GM10248 (cell line): ENCODE measurements at regions of chr2 and their contacts with region 1.

Region 1: GRCh38 chr2:237085248-237086221 is at the start of gene COPS8:
- DNase-seq: peak; percentile 95
- CTCF ChIP-seq: peak; percentile 18

Region 2: GRCh38 chr2:237060534-237061312 is 24.8 kb before region 1 on chr2:
- CTCF ChIA-PET with region 1: interaction called, 15 read pairs
- POLR2A ChIA-PET with region 1: no interaction called
- DNase-seq: peak; percentile 62
- CTCF ChIP-seq: peak; percentile 69

Region 3: GRCh38 chr2:237072067-237072931 is 13.2 kb before region 1 on chr2:
- CTCF ChIA-PET with region 1: interaction called, 20 read pairs
- POLR2A ChIA-PET with region 1: no interaction called
- DNase-seq: peak; percentile 61
- CTCF ChIP-seq: peak; percentile 91

Region 4: GRCh38 chr2:237097911-237098702 is 12.6 kb after region 1 on chr2:
- CTCF ChIA-PET with region 1: interaction called, 18 read pairs
- POLR2A ChIA-PET with region 1: no interaction called
- DNase-seq: no peak
- CTCF ChIP-seq: no peak